Dorsolateral prefrontal cortex (tissue), 120 donors: ENCODE measurements at regions of chr2 and their contacts with region 1.

Region 1: DNA sequence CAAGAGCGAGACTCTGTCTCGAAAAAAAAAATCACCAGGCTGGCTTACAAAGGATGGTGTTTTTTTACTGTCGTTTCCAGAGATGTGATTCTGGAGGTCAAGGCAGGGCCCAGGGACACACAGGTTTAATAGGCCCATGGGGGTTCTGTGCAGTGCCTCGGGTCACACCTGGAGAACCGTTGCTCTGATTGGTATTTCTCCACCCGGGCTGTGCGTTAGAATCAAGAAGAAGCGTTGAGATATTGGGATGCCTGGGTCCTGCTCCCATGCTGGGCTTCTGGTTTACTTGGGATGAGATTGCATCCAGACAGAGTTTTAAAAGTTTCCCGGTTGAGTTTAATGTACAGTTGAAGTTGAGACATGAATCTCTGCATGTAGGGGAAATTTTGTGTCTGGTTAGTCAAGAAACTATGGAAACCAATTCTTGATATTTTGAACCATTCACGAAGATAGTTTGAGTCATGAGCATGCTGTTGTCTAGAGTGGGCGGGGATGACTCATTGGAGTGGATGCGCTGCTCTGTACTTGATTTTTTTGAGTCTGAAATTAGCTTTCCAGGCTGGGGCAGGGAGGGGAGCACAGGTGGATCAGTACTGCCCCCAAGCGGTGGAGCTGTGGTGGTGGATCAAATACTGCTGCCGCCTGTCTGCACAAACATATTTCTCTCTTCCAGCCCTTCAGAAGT is 50.1 kb downstream of the GREB1 start:
- DNase-seq: peak; percentile 61 to 90 (median 83)
- H3K4me3 ChIP-seq: no peak overlapping the region
- H3K27ac ChIP-seq: peak overlapping the region in 24 of 59 donors; percentile 8 to 81 (median 47)
- H3K27me3 ChIP-seq: no peaks in the 10 kb centered on the region
- CTCF ChIP-seq: peak; percentile 84 to 100 (median 96)

Region 2: DNA sequence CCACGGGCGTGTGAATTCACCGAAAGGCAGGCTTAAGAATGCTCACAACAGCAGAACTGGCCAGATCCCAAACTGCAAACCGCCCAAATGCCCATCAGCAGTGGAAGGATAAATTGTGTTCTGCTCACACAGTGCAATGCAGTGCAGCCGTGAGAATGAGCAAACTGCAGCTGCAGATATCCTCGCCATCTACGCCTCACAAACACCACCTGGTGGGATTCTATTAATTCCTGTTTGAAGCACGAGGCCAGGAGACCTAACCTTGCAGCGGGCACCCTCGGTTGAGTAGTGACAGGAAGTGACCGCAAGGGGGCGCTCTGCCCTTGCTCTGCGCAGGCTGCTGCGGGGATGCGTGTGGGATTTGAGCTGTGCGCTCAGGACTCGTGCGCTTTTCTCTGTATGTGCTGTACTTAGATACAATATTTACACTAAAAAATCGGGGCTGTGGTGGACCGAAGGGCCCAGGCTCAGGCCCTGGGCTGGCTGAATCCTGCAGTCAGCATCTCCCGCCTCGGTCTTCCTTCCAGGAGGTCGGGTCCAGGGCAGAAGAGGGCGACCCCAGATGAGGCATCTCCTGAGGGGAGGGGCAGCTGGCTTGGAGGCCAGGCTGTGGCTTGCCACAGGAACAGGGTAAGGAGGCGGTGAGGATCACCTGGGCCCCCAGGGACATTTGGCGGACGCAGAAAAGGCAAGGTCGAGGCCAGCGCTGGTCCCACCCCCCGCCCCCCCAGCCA is 751.6 kb before region 1 on chr2:
- intact Hi-C with region 1: loop called in 1 of 2 experiments (anchors 10 kb)
- DNase-seq: peak; percentile 73 to 88 (median 86)
- H3K4me3 ChIP-seq: peak overlapping the region in 32 of 59 donors; percentile 0 to 42 (median 24)
- H3K27ac ChIP-seq: peak overlapping the region in 32 of 59 donors; percentile 2 to 80 (median 52)
- H3K27me3 ChIP-seq: peaks cover 0 to 8% (median 0%) of the 10 kb centered on the region in 45 donors
- CTCF ChIP-seq: peak; percentile 83 to 99 (median 97)

Region 3: DNA sequence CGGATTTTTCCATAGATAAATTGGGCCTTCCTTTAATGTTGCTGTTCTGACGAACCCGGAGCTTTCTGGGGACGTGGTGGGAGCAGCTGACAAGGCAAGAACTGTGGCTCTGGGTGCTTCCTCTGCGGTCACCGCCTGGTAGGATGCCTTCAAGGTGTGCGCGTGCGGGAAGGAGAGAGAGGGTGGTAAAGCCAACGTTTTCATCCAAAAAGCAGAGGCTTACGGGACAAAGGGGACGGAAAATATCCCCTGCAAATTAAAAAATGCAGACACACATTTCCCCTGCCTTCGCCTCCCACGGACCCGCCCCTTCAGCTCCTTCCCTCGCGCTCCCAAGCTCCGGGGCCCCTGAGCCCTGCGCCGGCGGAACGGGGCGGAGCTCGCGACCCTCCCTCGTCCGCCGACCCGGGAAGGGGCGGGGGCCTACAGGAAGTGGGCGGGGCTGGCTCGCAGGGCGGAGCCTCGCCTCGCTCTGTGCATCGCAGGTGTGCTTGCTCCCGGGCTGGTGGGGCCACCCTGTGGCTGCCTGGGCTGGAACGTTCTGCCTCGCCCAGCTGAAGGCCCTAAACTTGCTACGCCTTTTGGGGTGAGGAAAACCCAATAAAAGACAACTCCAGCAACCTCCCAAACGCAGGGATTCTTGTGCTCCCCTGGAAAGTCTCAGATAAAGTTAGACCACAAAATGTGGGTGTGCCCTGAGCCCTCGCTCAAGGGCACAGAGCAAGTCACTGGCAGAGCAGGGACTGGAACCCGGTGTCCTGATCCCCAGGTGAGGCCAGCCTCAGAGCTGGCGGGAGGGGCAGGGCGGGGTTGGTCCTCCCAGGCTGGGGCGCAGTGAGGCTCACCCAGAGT is 454.2 kb before region 1 on chr2:
- intact Hi-C with region 1: loop called (anchors 1 to 10 kb)
- DNase-seq: peak in 3 of 10 donors; percentile 48 to 65 (median 50)
- H3K4me3 ChIP-seq: peak overlapping the region in 58 of 59 donors; percentile 13 to 71 (median 51)
- H3K27ac ChIP-seq: peak overlapping the region in 32 of 59 donors; percentile 2 to 81 (median 38)
- H3K27me3 ChIP-seq: peaks cover 0 to 8% (median 0%) of the 10 kb centered on the region in 45 donors
- CTCF ChIP-seq: peak in 28 of 56 donors; percentile 6 to 50 (median 25)

Region 4: DNA sequence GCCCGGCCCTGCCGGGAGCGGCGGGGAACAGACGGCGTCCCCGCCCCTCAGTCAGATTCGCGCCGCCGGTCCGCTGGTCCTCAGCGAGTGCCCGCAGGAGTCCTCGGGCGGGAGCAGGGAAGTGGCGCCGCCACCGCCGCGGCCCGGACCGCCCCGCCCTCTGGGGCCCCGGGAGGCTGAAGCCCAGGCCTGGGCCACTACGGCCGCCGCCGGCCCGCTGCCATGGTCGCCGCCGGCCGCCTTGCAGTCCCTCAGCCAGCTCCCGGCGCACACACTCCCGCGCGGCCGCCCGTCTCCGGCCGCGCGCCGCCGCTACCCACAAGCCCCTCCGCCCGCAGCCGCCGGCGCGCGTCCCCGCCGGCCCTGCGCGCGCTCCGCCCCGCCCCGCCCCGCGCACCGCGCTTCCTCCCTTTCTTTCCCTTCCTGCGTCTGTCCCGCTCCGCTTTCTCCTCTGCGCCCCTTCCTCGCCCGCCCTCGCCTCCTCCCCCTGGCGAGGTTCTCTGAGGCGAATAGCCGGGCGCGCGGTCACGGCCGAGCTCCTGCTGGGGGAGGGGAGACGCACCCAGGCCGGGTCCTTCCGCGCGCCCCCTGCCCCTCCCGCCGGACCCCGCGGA is 239.5 kb before region 1 on chr2 and contains the start of gene ROCK2:
- intact Hi-C with region 1: loop called in 1 of 2 experiments (anchors 10 kb)
- DNase-seq: peak; percentile 63 to 88 (median 81)
- H3K4me3 ChIP-seq: peak within 1 kb of the TSS; percentile 76 to 100 (median 93)
- H3K27ac ChIP-seq: peak within 1 kb of the TSS; percentile 86 to 99 (median 97)
- H3K27me3 ChIP-seq: no peaks in the 10 kb centered on the region
- CTCF ChIP-seq: peak in 1 of 56 donors; percentile 6
- total RNA-seq, gene ROCK2: 42.2 to 120 (median 82.5) TPM

Region 5: GRCh38 chr2:11477994-11478393 is 106.0 kb before region 1 on chr2:
- intact Hi-C with region 1: loop called (anchors 1 kb)
- DNase-seq: peak; percentile 85 to 98 (median 94)
- H3K4me3 ChIP-seq: no peak overlapping the region
- H3K27ac ChIP-seq: peak overlapping the region in 9 of 59 donors; percentile 0 to 44 (median 21)
- H3K27me3 ChIP-seq: no peaks in the 10 kb centered on the region
- CTCF ChIP-seq: peak; percentile 90 to 100 (median 97)

Region 6: DNA sequence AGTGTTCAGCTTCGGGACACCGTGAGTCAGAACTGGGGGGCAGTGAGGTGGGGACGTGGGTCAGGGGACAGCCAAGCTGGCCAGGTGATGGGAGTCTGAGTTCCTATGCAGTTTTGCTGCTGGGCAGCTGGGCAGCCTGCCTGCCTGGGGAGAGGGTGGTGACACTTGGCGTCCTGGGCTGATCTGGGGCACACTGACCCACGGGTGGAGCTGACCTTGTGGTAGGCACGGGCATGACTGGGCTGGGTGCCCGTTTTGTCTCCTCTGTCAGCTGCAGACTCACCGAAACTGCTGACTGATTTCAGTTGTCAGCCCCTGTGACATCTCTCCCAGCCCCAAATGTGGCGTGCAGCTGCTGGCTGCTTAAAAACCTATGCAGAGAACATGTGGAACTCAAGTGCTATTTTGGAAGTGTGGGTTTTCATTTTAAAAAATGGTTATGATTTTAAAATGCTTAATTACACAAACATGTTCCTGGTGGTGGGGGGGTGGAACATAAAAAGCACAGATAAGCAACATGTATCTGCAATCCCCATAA is 85.4 kb before region 1 on chr2:
- intact Hi-C with region 1: loop called in 1 of 2 experiments (anchors 5 kb)
- DNase-seq: peak in 9 of 10 donors; percentile 65 to 90 (median 82)
- H3K4me3 ChIP-seq: peak overlapping the region in 51 of 59 donors; percentile 1 to 57 (median 30)
- H3K27ac ChIP-seq: peak overlapping the region; percentile 46 to 96 (median 89)
- H3K27me3 ChIP-seq: no peaks in the 10 kb centered on the region
- CTCF ChIP-seq: peak in 4 of 56 donors; percentile 5 to 14 (median 7)

Region 7: DNA sequence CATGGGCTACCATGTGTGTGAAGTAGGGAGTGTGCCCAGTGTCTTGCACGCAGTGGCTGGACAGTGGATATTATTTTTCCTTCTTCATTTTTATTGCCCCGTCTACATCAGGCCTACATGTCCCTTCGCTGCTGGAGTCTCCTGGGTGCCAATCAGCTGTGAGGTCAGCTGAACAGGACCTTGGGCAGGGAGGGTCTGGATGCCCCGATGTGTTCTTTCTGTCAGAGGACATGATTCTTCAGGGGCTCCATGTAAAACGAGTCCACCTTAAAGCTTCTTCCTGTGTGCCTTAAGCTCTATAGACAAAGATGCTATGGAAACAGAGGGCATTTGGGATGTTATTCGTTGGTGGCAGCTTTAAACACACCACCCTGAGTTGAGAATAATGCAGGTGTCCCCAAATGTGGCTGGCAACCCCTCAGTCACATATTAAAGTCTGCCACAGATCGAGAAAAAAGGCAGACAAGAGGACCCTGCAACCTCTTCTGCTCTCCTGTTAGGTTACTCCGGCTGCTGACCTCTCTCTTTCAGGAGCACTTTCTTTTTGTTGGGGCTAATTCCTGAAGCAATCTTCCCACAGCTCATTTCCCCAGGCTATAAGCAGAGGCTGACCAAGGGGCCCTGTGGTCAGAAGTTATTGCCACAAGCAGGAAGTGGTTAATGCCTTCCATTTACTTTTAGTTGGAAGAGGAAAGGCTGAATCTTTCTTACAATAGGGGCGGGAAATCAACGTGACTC is 30.2 kb before region 1 on chr2:
- intact Hi-C with region 1: no loop called
- DNase-seq: peak in 1 of 10 donors; percentile 22
- H3K4me3 ChIP-seq: no peak overlapping the region
- H3K27ac ChIP-seq: peak overlapping the region in 2 of 59 donors; percentile 16 to 28
- H3K27me3 ChIP-seq: no peaks in the 10 kb centered on the region
- CTCF ChIP-seq: no peak

Region 8: DNA sequence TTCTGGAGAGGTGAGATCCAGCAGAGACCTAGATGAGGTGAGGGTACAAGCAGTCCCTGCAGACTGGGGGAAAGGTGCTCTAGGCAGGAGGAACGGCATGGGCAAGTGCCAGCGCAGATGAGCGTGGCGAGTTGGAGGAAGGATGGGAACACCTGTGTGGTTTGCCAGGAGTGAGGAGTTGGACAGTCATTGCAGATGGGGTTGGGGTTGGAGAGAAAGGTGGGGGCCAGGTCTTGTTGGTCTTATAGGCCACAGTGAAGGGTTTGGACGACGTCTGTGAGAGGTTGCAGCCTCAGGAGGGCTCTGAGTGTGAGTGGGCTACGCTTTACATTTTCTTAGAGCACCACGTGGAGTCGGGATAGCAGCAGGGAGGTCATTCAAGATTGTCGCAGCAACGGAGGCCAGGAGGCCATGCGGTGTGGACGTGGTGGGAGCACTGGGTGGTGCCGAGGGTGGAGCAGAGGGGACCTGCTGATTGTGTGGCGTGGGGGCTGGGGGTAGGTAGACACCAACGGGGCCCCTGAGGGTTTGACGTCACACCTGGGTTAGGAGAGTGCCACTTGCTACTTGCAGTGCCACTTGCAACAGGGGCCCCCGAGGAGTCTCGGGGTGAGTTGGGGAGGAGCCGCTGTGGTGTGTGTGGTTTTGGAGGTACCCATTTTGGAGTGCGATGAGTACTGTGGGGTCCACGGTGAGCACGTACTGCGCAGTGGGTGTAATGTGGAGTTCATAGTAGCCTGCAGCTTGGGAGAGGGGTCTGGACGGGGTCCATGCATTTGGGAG is 228.7 kb after region 1 on chr2:
- intact Hi-C with region 1: no loop called
- DNase-seq: no peak
- H3K4me3 ChIP-seq: no peak overlapping the region
- H3K27ac ChIP-seq: no peak overlapping the region
- H3K27me3 ChIP-seq: no peaks in the 10 kb centered on the region
- CTCF ChIP-seq: no peak